Activated B cell treated with CpG ODN at 0.5 μM for 24 hours (primary cell): ENCODE measurements at regions of chr10 and their contacts with region 1.

Region 1: DNA sequence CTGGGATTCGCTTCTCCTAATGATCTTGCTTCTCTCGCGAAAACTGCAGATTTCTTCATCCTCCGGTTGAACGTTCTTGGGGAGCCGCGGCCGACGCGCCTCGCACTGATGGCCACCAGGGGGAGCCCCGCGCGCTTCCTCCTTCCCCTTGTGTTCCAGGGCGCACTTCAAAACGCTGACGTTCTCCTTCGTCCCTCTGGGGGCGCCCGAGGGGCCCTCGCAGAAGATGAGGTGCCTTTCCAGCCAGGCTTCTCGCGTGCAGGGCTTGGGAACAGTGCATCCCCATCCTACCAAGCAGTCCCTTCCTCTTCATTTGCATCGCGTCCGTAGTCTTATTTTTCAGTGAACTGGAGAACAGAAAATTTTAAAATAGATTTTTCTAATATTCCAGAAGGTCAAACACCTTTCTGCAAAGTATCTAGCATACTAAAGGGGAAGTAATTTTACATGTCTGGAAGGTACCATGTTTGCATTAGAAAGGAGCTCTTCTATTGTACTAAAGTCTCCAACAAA is 22.5 kb downstream of the GSTO2 start:
- DNase-seq: peak; percentile 77
- ATAC-seq: peak; percentile 100
- H3K4me3 Mint-ChIP-seq: peak overlapping the region; percentile 61
- H3K27ac Mint-ChIP-seq: no peak overlapping the region
- H3K4me1 Mint-ChIP-seq: peaks cover 6% of the 10 kb centered on the region
- H3K27me3 Mint-ChIP-seq: peaks cover 9% of the 10 kb centered on the region
- CTCF ChIP-seq: peak; percentile 94

Region 2: DNA sequence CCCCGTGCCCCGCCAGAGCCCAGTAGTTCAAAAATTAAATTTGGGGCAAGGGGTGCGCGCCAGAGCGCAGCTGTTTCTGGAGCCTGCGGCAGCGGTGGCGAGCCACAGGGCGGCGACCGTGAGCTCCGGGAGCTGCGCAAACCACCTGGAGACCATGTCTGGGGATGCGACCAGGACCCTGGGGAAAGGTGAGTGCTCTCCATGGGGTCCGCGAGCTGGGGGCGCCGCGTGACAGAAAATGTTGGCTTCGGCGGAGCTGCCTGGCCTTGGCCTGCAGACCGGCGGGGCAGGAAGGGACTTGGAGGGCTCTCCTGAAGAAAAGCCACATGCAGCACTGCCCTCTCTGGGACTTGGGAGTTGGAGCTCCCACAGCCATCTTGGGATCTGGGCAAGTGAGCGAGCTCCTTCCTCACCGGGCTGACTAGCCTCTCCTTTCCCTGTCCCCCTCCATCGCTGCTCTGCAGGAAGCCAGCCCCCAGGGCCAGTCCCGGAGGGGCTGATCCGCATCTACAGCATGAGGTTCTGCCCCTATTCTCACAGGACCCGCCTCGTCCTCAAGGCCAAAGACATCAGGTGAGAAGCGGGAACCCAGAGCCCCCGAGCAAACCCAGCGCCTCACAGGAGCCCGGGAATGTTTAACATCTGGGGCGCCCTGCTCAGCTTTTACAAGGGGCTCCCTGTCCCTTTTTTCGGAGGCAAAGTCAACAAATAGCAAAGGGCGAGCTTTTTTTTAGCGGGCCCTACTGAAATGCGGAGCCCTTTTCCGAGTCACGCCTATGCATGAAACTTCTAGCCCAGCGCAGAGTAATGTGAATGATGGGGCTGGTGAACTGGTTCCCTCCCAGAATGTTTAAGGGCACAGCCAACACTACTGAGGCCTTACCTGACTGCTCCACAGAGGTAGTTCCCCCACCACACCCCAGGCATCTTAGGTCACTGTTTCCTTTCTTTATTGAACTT is 16.5 kb before region 1 on chr10:
- CTCF ChIA-PET with region 1: interaction called, 21 read pairs
- POLR2A ChIA-PET with region 1: no interaction called
- intact Hi-C with region 1: no loop called
- DNase-seq: peak; percentile 36
- ATAC-seq: peak; percentile 83
- H3K4me3 Mint-ChIP-seq: no peak overlapping the region
- H3K27ac Mint-ChIP-seq: no peak overlapping the region
- H3K4me1 Mint-ChIP-seq: peaks cover 6% of the 10 kb centered on the region
- H3K27me3 Mint-ChIP-seq: peaks cover 5% of the 10 kb centered on the region
- CTCF ChIP-seq: no peak

Region 3: DNA sequence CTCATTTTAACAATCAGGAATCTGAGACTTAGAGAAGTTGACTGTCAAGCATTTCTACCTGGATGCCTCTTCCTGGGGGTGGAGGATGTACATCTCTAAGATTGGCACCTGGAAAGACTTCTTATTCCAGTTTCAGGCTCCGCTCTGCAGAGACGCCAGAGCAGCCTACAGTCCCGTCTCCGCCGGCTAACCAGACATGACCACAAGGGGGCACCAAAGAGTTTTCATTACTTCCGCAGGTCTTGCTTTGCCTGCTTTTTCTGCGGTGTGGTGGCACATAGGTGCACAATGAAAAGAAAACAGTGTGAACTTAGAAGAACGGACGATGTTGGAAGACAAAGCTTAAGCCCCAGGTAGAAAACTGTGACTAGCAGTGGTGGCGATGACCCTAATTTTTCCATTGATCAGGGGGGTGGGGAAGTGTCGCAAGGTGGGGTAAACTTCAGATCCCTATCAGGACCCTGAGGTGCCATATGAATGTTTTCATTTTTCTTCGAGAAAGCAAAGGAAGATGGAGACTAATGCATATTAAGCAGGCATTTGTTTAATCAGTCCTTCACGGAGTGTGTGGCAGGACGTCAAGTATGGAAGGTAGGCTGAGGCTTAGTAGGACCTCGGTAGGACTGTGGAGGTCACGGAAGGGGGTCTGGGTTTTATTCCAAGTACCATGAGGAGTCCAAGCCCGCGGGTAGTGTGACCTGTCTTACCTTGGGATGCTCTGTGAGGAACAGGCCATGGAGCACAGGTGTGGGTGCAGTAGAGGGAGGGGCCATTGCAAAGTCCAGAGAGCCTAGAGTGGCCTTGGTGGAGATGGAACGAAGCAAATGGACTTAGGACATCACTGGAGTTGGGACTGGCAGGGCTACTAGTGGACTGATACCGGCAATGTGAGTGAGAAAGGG is 289.5 kb after region 1 on chr10:
- CTCF ChIA-PET with region 1: interaction called, 3 read pairs
- POLR2A ChIA-PET with region 1: no interaction called
- intact Hi-C with region 1: loop called (anchors 5 kb)
- DNase-seq: peak; percentile 21
- ATAC-seq: peak; percentile 54
- H3K4me3 Mint-ChIP-seq: no peak overlapping the region
- H3K27ac Mint-ChIP-seq: no peak overlapping the region
- H3K4me1 Mint-ChIP-seq: no peaks in the 10 kb centered on the region
- H3K27me3 Mint-ChIP-seq: peaks cover 21% of the 10 kb centered on the region
- CTCF ChIP-seq: no peak

Region 4: GRCh38 chr10:104777086-104777799 is 485.7 kb after region 1 on chr10:
- CTCF ChIA-PET with region 1: no interaction called
- POLR2A ChIA-PET with region 1: no interaction called
- intact Hi-C with region 1: loop called (anchors 5 kb)
- DNase-seq: no peak
- ATAC-seq: no peak
- H3K4me3 Mint-ChIP-seq: no peak overlapping the region
- H3K27ac Mint-ChIP-seq: no peak overlapping the region
- H3K4me1 Mint-ChIP-seq: no peaks in the 10 kb centered on the region
- H3K27me3 Mint-ChIP-seq: peaks cover 3% of the 10 kb centered on the region
- CTCF ChIP-seq: no peak